ENCODE measurements at regions of chr4 and their contacts with region 1.

Region 1: DNA sequence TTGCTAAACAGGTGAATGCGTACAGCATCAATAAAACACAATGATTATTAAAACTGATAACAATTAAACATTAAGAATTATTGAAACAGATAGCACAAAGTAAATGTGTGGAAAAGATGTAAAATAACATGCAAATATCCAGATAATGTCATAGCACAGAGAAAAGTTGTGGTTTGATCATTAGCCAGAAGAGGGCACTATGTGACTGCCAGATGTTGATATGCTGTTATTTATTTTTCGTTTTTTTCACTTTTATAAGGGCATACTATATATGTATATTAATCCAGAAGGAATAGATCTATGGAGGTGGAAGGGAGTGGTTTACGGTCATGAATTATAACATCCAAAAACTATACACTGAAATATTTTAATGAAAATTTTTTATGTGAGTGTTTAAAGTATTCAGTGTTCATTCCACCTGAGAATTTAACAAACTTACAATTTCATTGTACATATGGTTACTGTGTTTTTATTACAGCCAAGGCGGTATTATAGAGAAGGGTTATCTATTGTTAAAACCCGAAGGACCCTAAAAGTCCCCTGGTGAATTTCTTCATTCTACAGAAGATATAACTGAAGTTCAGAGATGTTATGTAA is 211.9 kb upstream of the UGT8 start:
- DNase-seq: no peak

Region 2: GRCh38 chr4:113394730-113395530 is 991.8 kb before region 1 on chr4:
- intact Hi-C with region 1: loop called (anchors 10 kb)
- DNase-seq: no peak

Region 3: DNA sequence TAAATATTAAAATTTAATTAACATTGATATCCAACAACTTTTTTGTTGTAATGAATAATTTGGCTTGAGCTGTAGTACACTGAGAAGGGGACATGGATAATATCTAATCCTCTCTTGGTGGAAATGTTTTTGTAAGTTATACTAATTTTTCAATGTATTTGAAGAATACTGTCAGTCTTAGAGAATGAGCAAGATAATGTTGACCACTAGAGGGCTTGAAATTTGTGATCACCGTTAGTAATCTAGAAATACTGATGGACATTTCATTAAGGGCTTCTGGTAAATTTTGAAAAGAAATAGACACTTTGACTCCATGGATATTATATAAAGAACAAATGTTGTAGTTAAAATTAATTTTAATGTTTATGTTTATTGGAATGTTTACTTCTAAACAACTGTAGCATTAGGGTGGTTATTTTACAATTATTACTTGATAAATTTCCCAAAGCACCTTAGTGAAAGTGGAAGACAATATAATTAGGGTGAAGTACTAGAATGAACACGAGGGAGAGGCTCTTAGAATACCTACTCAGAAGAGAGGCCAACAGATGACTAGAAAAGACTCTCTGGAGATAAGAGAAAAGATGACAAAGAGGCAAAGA is 605.2 kb before region 1 on chr4:
- intact Hi-C with region 1: loop called (anchors 10 kb)
- DNase-seq: no peak

Region 4: DNA sequence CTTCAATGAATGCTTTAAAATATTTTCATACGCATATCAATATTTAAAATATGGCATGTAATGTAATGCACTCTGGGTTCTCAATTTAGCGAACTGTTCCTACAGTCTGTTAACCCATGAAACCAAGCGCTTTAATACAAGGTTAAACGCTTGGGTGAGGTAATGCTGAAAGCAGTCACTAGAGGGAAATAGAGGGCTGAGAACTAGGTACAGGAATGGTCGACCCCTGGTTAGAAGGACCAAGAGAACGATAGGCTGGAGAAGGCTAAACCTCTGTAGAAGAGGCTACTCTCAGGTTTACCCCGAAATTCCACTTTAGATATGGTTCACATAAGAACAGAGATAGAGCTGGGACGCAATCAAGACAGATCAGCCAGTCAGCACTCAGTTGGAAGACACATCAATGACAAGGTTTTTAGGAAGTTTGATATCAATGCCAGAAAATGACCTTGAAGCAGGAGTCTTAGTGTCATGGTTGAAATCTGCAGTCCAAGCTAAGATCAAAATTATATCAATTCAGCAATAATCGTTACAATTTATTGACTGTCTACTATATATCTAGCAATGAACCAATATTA is 434.2 kb before region 1 on chr4:
- intact Hi-C with region 1: loop called (anchors 5 kb)
- DNase-seq: no peak

Region 5: GRCh38 chr4:114087596-114088230 is 299.0 kb before region 1 on chr4:
- intact Hi-C with region 1: loop called (anchors 10 kb)
- DNase-seq: no peak

Region 6: GRCh38 chr4:114659386-114660008 is 272.8 kb after region 1 on chr4:
- intact Hi-C with region 1: loop called (anchors 5 kb)
- DNase-seq: no peak

Region 7: GRCh38 chr4:114694770-114695169 is 308.0 kb after region 1 on chr4:
- intact Hi-C with region 1: loop called (anchors 5 kb)
- DNase-seq: no peak